Stomach (tissue), 19 donors: ENCODE measurements at regions of chr7 and their contacts with region 1.

Region 1: GRCh38 chr7:117127585-117128168 is 174.4 kb downstream of the ST7 start:
- DNase-seq: peak; percentile 55 to 80
- H3K4me3 ChIP-seq: no peak overlapping the region
- H3K27ac ChIP-seq: no peak overlapping the region
- H3K4me1 ChIP-seq: peaks cover 11 to 20% (median 13%) of the 10 kb centered on the region in 4 donors
- H3K27me3 ChIP-seq: no peaks in the 10 kb centered on the region
- CTCF ChIP-seq: peak in 5 of 7 experiments; percentile 44 to 82 (median 68)
- EP300 ChIP-seq: no peak
- POLR2A ChIP-seq: no peak

Region 2: DNA sequence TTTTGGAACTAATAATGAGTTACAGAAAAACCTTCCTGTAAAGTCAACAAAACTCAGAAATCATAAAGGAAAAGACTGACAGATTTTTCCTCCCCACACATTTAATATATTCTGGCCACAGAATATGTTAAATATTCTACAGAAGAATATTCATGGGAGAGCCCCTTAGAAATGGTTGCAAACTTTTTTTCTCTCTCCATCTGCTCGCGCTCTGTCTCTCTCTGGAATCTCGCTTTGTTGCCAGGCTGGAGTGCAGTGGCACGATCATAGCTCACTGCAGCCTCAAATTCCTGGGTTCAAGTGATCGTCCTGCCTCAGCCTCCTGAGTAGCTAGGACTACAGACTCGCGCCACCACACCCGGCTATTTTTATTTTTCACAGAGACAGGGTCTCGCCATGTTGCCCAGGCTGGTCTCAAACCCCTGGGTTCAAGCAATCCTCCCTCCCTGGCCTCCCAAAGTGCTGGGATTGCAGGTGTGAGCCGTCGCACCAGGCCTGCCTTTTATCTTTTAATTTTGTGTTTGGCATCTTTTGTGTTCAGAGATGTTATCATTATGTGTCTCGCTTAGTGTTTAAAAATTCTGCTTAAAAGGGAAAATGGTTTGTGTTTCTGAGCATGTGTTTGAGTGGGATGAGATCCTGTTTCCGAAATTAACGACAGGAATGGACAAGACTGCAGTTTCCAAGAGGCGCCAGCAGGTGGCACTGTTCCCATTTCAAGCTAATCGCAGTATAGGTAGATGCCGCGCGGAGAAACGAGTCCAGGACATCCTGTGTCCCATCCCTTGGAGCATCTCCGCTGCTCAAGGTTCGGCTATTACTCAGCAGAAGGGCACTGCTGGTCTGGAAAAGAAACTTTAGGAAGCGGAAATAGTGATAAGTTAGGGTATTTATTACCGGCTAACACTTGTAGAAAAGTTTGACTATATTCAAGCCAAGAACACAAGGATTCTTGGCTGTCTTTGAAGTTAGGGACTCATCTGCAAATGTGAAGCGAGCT is 197.5 kb before region 1 on chr7:
- intact Hi-C with region 1: loop called (anchors 5 kb)
- DNase-seq: peak; percentile 89 to 90
- H3K4me3 ChIP-seq: no peak overlapping the region
- H3K27ac ChIP-seq: no peak overlapping the region
- H3K4me1 ChIP-seq: peaks cover 0 to 8% (median 1%) of the 10 kb centered on the region in 4 donors
- H3K27me3 ChIP-seq: no peaks in the 10 kb centered on the region
- CTCF ChIP-seq: peak in 6 of 7 experiments; percentile 75 to 93 (median 91)
- EP300 ChIP-seq: no peak
- POLR2A ChIP-seq: no peak

Region 3: DNA sequence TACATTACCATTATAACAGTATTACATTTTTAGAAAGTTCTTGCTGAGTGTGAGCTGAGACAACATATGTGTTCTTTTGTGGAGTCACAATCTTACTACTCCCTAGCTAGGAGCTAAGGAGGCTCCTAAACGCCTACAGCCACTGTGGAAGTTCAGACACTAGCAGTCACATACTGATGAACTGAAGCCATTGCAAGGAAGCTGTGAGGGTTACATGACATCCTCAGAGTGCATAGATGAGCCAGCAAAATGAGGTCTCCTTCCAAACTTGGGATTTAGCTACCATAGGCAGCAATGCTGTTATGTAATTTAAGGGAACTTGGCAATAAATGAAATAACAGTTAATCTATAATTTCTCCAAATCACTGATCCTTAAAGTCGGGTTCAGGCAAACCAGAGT is 185.2 kb before region 1 on chr7:
- intact Hi-C with region 1: no loop called
- DNase-seq: no peak
- H3K4me3 ChIP-seq: no peak overlapping the region
- H3K27ac ChIP-seq: no peak overlapping the region
- H3K4me1 ChIP-seq: no peaks in the 10 kb centered on the region
- H3K27me3 ChIP-seq: no peaks in the 10 kb centered on the region
- CTCF ChIP-seq: no peak
- EP300 ChIP-seq: no peak
- POLR2A ChIP-seq: no peak

Region 4: GRCh38 chr7:116990056-116990455 is 137.6 kb before region 1 on chr7:
- intact Hi-C with region 1: loop called (anchors 5 kb)
- DNase-seq: no peak
- H3K4me3 ChIP-seq: no peak overlapping the region
- H3K27ac ChIP-seq: no peak overlapping the region
- H3K4me1 ChIP-seq: peaks cover 0 to 10% (median 2%) of the 10 kb centered on the region in 4 donors
- H3K27me3 ChIP-seq: no peaks in the 10 kb centered on the region
- CTCF ChIP-seq: no peak
- EP300 ChIP-seq: no peak
- POLR2A ChIP-seq: no peak